Activated naive CD4-positive, alpha-beta T cell treated with anti-CD3 and anti-CD28 coated beads, Interleukin-2, amount 10 ng/mL, durations not matched to agents 7 days and 5 days (primary cell): ENCODE measurements at regions of chr7 and their contacts with region 1.

Region 1: DNA sequence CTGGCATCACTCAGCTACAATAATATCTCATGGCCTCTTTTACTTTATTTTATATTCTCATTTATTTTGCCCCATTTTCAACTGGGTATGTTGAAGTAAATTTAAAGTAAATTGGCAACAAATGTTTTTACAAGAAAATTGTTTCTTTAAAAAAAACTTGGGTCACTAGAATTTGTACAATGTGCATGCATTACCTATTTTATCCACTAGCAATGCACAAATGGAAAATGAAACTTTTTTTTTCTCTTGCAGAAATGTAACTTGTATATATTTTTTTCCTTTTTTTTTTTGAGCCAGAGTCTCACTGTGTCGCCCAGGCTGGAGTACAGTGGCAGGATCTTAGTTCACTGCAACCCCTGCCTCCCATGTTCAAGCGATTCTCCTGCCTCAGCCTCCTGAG is 10.3 kb upstream of the H2AZ2 start:
- DNase-seq: no peak
- H3K4me3 Mint-ChIP-seq: no peak overlapping the region
- H3K27ac Mint-ChIP-seq: no peak overlapping the region
- H3K4me1 Mint-ChIP-seq: peaks cover 15% of the 10 kb centered on the region
- H3K27me3 Mint-ChIP-seq: peaks cover 6% of the 10 kb centered on the region

Region 2: GRCh38 chr7:44847508-44847920 is 10.6 kb before region 1 on chr7:
- CTCF ChIA-PET with region 1: interaction called, 13 read pairs
- DNase-seq: peak; percentile 89
- H3K4me3 Mint-ChIP-seq: peak overlapping the region; percentile 83
- H3K27ac Mint-ChIP-seq: peak overlapping the region; percentile 97
- H3K4me1 Mint-ChIP-seq: peaks cover 43% of the 10 kb centered on the region
- H3K27me3 Mint-ChIP-seq: no peaks in the 10 kb centered on the region

Region 3: GRCh38 chr7:44876393-44876792 is 18.2 kb after region 1 on chr7:
- CTCF ChIA-PET with region 1: interaction called, 41 read pairs
- DNase-seq: no peak
- H3K4me3 Mint-ChIP-seq: no peak overlapping the region
- H3K27ac Mint-ChIP-seq: no peak overlapping the region
- H3K4me1 Mint-ChIP-seq: peaks cover 21% of the 10 kb centered on the region
- H3K27me3 Mint-ChIP-seq: peaks cover 7% of the 10 kb centered on the region

Region 4: DNA sequence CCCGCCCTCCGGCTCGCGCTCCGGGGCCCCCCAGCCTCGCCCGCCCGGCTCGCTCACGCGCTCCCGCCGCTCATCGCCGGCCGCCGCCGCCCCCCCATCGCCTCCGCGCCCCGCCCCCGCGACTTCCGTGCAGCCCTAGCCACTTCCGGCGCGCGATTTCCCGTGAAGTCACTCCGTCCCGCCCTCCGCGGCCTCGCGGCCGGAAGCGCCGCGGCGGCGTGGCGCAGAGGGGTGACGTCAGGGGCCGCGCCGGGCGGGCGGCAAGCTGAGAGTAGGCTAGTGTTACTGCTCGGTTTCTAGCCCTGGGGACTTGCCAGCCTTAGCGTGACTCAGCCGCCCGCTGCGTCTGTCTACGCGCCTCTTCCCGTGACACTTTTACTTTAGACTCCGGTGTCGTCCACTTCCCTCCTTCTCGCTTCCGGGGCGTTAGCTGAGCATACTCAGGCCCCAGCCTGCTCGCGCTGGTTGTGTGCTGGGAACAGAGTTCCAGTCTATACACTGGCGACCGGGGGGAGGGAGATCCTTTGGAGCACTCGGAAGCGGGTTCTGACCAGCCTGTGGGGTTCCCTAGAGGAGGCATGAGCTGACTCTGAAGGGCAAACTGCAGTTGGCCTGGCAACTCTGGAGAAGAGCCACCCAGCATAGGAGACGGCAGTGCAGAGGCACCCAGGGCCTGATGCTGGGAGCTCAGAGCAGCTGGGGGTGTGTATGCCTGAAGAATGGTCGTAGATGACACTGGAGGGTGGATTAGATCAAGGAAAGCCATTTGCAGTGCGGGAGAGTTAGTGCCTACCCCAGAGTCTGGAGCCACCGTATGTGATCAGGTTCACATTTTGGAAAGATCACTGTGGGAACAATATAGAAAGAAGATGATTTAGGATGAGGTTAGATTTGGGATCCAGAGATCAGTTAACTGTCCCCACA is 27.5 kb after region 1 on chr7 and contains the start of gene PURB:
- CTCF ChIA-PET with region 1: interaction called, 41 read pairs
- DNase-seq: peak; percentile 96
- H3K4me3 Mint-ChIP-seq: peak within 1 kb of the TSS; percentile 98
- H3K27ac Mint-ChIP-seq: peak within 1 kb of the TSS; percentile 100
- H3K4me1 Mint-ChIP-seq: peaks cover 64% of the 10 kb centered on the region
- H3K27me3 Mint-ChIP-seq: no peaks in the 10 kb centered on the region

Region 5: DNA sequence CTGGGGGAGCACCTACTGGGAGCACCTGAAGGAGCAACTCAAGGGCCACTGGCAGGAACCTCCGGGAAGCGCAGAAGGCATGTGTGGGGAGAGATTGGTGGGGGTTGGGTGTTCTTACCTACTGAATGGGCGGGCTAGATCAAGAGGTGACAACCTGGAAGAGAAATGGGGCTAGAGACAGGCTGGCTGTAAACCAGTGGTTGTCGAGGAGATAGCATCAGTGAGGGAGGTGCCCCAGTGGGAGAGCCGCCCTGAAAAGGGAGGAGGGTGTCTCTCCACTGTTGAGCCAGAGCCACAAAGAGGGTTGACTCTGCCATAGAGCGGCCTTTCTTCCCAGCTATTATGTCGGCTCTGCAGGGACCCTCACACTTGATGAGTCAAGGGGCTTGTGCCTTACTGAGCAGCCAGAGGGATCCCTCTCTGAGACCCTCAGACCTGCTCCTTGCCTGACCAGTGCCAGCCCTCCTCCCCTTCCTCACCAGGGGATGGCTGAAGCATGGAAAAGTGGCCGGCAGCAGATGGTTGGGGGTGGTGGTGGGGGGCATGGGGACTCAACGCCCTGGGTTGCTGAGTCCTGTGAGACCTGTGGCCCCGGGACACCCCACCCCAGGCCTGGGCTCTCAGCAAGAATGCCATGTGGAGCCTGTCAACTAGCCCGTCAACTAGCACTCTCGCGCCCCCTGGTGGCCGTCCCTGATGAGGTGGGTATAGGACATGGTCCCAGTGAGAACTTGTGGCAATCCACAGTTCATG is 63.6 kb after region 1 on chr7:
- CTCF ChIA-PET with region 1: interaction called, 120 read pairs
- DNase-seq: peak; percentile 96
- H3K4me3 Mint-ChIP-seq: no peak overlapping the region
- H3K27ac Mint-ChIP-seq: no peak overlapping the region
- H3K4me1 Mint-ChIP-seq: peaks cover 16% of the 10 kb centered on the region
- H3K27me3 Mint-ChIP-seq: peaks cover 3% of the 10 kb centered on the region

Region 6: GRCh38 chr7:45136106-45137060 is 278.2 kb after region 1 on chr7:
- CTCF ChIA-PET with region 1: interaction called, 40 read pairs
- DNase-seq: peak; percentile 82
- H3K4me3 Mint-ChIP-seq: no peak overlapping the region
- H3K27ac Mint-ChIP-seq: no peak overlapping the region
- H3K4me1 Mint-ChIP-seq: peaks cover 32% of the 10 kb centered on the region
- H3K27me3 Mint-ChIP-seq: peaks cover 38% of the 10 kb centered on the region